PC-3 (cell line): ENCODE measurements at regions of chr17 and their contacts with region 1.

Region 1: GRCh38 chr17:82351716-82352488 is 7.1 kb upstream of the TEX19 start:
- DNase-seq: peak; percentile 91
- ATAC-seq: peak; percentile 85
- H3K4me3 ChIP-seq: no peak overlapping the region
- H3K27ac ChIP-seq: no peak overlapping the region
- H3K4me1 ChIP-seq: peaks cover 11% of the 10 kb centered on the region
- H3K27me3 ChIP-seq: no peaks in the 10 kb centered on the region
- CTCF ChIP-seq: peak; percentile 95

Region 2: GRCh38 chr17:82188001-82188961 is 163.6 kb before region 1 on chr17:
- CTCF ChIA-PET with region 1: no interaction called
- POLR2A ChIA-PET with region 1: no interaction called
- intact Hi-C with region 1: no loop called
- DNase-seq: no peak
- ATAC-seq: no peak
- H3K4me3 ChIP-seq: no peak overlapping the region
- H3K27ac ChIP-seq: no peak overlapping the region
- H3K4me1 ChIP-seq: no peaks in the 10 kb centered on the region
- H3K27me3 ChIP-seq: no peaks in the 10 kb centered on the region
- CTCF ChIP-seq: no peak

Region 3: DNA sequence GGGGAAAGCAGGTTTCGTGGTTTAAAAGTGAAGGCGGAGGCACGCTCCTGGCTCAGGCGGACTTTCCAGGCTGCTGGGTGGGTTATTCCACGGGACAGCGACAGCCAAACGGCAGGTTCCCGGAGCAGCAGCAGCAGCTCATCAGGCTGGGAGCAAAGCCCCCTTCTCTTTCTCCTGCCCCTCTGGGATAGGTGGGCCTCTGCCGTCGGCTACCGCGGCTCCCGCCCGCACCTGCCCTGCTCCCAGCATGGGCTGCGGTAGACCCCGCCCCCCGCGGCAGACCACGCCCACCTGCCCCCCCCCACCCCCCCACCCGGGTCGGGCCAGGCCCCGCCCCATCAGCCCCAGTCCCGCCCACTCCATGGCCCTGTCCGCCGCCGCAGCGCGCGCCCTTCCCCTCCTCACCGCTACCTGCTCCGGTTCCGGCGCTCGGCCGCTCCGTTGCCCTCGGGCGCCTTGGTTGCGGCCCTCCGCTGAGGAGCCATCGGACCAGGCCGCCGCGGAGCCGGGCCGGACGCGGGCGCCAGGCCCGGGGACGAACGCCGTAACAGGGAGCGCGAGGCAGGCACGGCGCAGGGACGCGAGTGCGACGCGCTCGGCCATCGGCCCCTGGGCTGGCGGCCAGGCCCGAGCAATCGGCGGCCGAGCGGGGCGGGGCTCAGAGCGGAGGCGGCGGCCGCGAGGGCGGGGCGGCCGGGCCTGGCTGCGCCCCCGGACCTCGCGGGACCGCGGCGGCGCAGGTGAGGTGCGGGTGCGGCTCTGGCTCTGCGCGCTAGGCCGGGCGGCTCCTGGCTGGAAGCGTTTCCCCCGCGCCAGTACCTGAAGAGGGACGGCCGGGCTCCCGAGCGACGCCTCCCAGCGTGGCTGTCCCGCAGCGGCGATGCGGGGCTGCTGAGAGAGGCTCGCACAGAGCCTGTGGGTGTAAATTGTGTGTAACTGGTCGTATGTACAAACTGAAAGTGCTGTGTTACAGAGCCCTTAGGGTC is 66.4 kb after region 1 on chr17 and contains the starts of genes HEXD and OGFOD3:
- CTCF ChIA-PET with region 1: no interaction called
- POLR2A ChIA-PET with region 1: no interaction called
- intact Hi-C with region 1: loop called (anchors 5 kb)
- DNase-seq: peak; percentile 91
- ATAC-seq: peak; percentile 82
- H3K4me3 ChIP-seq: peak within 1 kb of the TSS; percentile 97
- H3K27ac ChIP-seq: peak within 1 kb of the TSS; percentile 42; the same call in 1 of the 2 replicates
- H3K4me1 ChIP-seq: peaks cover 11% of the 10 kb centered on the region
- H3K27me3 ChIP-seq: no peaks in the 10 kb centered on the region
- CTCF ChIP-seq: no peak
- total RNA-seq, gene HEXD: 12.7 and 18.3 TPM in 2 replicates
- total RNA-seq, gene OGFOD3: 56.1 and 79.2 TPM in 2 replicates

Region 4: GRCh38 chr17:82457997-82458864 is 106.3 kb after region 1 on chr17 and contains the start of gene NARF:
- CTCF ChIA-PET with region 1: no interaction called
- POLR2A ChIA-PET with region 1: no interaction called
- intact Hi-C with region 1: loop called (anchors 10 kb)
- DNase-seq: peak; percentile 98
- ATAC-seq: peak; percentile 98
- H3K4me3 ChIP-seq: peak within 1 kb of the TSS; percentile 95
- H3K27ac ChIP-seq: peak within 1 kb of the TSS; percentile 92
- H3K4me1 ChIP-seq: peaks cover 22% of the 10 kb centered on the region
- H3K27me3 ChIP-seq: no peaks in the 10 kb centered on the region
- CTCF ChIP-seq: no peak
- total RNA-seq, gene NARF: 59.5 and 64.6 TPM in 2 replicates

Region 5: GRCh38 chr17:82528484-82529265 is 176.8 kb after region 1 on chr17:
- CTCF ChIA-PET with region 1: no interaction called
- POLR2A ChIA-PET with region 1: no interaction called
- intact Hi-C with region 1: loop called (anchors 10 kb)
- DNase-seq: peak; percentile 93
- ATAC-seq: peak; percentile 78
- H3K4me3 ChIP-seq: peak overlapping the region; percentile 16; the same call in 1 of the 2 replicates
- H3K27ac ChIP-seq: peak overlapping the region; percentile 70
- H3K4me1 ChIP-seq: peaks cover 48% of the 10 kb centered on the region
- H3K27me3 ChIP-seq: no peaks in the 10 kb centered on the region
- CTCF ChIP-seq: peak; percentile 84

Region 6: DNA sequence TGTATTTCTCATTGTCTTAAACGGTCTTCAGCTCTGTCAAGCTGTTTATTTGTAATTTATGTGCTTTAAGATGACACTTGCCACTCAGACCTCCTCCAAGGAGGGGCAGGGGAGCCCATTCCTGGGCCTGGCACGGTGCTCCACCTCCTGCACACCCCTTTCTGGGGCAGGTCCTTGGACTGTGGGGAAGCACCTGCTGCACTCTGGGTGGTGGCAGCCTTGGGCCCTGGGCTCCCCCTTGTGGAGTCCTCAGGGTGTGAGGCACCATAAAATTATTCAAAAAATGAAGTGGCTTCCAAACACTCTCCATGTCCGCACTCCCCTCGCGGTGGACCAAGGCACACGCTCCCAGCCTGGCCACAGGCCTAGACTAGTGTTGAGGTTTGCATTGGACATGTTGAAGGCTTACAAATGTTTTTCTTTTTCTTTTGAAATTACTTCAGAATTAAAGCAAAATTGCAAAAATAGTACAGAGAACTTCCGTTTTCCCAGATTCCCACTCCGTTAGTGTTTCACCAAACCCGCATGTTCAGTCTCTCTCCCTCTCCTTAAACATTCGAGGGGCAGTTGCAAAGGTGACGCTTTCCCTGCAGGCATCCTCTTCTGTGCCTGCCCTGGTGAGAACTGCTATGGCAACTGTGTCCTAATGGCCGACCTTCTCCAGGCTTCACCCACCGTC is 200.0 kb after region 1 on chr17:
- CTCF ChIA-PET with region 1: no interaction called
- POLR2A ChIA-PET with region 1: no interaction called
- intact Hi-C with region 1: loop called (anchors 5 kb)
- DNase-seq: peak; percentile 77
- ATAC-seq: peak; percentile 91
- H3K4me3 ChIP-seq: no peak overlapping the region
- H3K27ac ChIP-seq: no peak overlapping the region
- H3K4me1 ChIP-seq: peaks cover 13% of the 10 kb centered on the region
- H3K27me3 ChIP-seq: no peaks in the 10 kb centered on the region
- CTCF ChIP-seq: peak; percentile 84